ENCODE measurements at regions of chr10 and their contacts with region 1.

Region 1: DNA sequence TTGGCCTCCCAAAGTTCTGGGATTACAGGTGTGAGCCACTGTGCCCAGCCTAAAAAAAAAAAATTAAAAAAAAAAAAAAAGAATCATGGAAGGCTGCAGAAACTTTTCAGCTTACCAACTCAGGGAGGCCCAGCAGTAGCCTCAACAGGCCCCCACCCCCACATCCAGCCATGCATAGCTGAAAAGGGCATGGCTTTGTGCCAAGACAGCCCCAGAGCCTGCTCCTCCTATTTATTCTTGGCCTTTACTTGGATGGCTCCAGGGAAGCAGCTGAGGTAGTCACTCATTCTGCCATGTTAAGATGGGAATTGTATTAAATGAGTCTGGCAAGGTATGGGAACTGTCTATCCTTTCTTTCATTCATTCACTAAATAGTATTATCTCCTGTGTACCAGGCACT is 13.7 kb upstream of the CNNM2 start:
- DNase-seq: no peak
- CTCF ChIP-seq: no peak

Region 2: DNA sequence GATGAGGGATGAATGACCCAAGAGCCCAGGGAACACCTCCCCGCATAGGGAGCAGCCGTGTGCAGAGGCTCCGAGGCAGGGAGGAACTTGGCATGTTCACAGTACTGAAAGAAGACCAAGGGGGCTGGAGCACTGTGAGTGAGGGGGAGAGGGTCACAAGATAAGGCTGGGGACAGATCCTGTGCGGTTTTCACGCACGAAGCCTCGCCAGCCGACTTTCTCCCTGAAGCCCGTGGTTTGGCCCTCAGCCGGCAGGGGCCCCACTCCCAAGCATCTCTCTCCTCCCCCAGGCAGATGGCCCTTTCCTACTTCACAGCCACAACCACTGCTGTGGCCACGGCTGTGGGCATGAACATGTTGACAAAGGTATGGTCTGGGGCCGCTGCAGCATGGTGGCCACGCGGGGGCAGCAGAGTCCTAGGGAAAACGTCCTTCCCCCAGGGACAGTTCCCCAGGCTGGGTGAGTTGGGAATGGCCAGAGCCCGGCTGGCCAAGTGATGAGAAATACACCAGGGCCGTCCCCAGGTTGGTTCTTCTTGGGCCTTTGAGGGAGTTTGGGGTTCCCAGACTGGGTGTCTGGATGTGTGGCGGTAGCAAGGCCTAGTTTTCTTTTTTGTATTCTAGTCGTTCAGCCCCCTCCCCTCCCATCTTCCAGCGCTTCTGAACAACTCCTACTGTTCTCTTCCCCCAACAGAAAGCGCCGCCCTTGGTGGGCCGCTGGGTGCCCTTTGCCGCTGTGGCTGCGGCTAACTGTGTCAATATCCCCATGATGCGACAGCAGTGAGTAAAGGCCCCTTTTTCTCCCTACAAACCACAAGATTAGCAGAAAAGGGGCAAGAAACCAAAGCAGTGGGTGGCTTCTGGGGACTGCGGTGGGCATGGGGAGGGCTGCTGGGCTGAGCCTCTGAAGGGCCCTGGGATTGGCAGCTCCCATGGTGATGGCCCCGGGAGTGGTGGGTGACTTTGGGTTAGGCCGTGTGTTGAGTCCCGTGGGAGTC is 175.0 kb before region 1 on chr10:
- in situ Hi-C with region 1: loop called (anchors 10 kb)
- DNase-seq: peak; percentile 81
- CTCF ChIP-seq: peak; percentile 92

Region 3: DNA sequence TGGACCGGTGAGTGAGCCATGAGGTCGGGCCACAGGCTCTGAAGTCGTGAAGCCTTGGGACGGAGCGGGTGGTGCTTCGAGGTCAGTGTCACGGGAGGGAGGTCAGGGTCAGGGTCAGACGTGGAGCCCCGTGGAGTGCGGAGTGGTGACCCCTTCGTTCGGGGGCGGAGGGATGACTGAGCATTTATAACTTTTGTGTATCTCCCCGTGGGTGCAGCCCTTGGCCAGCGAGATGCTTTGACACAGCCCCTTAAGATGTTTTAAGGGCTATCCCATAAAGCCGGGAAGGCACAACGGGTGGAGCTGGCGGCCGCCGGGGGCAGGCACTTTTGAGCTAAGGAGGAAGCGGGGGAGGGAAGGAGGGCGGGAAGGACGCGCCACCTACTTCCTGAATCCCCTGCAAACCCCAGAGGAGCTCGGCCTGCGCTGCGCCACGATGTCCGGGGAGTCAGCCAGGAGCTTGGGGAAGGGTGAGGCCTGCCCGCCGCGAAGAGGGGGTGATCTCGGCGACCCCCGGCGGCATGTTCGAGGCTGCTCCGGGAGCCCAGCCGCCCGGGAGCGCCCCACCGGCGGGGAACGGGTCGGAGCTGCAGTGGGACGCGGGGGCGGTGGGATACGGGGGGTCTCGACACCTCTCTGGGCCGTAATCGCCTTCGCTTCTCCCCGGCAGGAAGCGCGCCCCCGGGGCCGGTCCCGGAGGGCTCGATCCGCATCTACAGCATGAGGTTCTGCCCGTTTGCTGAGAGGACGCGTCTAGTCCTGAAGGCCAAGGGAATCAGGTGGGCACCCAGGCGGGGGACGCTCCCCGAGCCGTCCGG is 1350.4 kb after region 1 on chr10 and contains the start of gene GSTO1:
- in situ Hi-C with region 1: no loop called
- DNase-seq: peak; percentile 81
- CTCF ChIP-seq: no peak